H1 (cell line): ENCODE measurements at regions of chr15 and their contacts with region 1.

Region 1: GRCh38 chr15:71485099-71485693 is 325.2 kb upstream of the NR2E3 start:
- DNase-seq: no peak
- H3K4me3 ChIP-seq: no peak overlapping the region
- H3K27ac ChIP-seq: no peak overlapping the region
- H3K4me1 ChIP-seq: no peaks in the 10 kb centered on the region
- H3K27me3 ChIP-seq: no peaks in the 10 kb centered on the region
- CTCF ChIP-seq: peak; percentile 35 to 73 (median 66)
- EP300 ChIP-seq: no peak
- POLR2A ChIP-seq: no peak
- RAD21 ChIP-seq: peak in 1 of 2 experiments; percentile 40; a peak in 2 of 4 replicates

Region 2: GRCh38 chr15:71461748-71462147 is 23.4 kb before region 1 on chr15:
- CTCF ChIA-PET with region 1: interaction called, 16 read pairs
- POLR2A ChIA-PET with region 1: no interaction called
- DNase-seq: no peak
- H3K4me3 ChIP-seq: no peak overlapping the region
- H3K27ac ChIP-seq: no peak overlapping the region
- H3K4me1 ChIP-seq: peaks cover 2 to 5% (median 2%) of the 10 kb centered on the region in 4 experiments; a peak in 5 of 7 replicates
- H3K27me3 ChIP-seq: no peaks in the 10 kb centered on the region
- CTCF ChIP-seq: no peak
- EP300 ChIP-seq: no peak
- POLR2A ChIP-seq: no peak
- RAD21 ChIP-seq: no peak

Region 3: GRCh38 chr15:71469413-71469812 is 15.8 kb before region 1 on chr15:
- CTCF ChIA-PET with region 1: interaction called, 21 read pairs
- POLR2A ChIA-PET with region 1: no interaction called
- DNase-seq: no peak
- H3K4me3 ChIP-seq: no peak overlapping the region
- H3K27ac ChIP-seq: no peak overlapping the region
- H3K4me1 ChIP-seq: peaks cover 2 to 5% (median 2%) of the 10 kb centered on the region in 4 experiments; a peak in 5 of 7 replicates
- H3K27me3 ChIP-seq: no peaks in the 10 kb centered on the region
- CTCF ChIP-seq: peak in 1 of 3 experiments; percentile 10; a peak in 1 of 4 replicates
- EP300 ChIP-seq: no peak
- POLR2A ChIP-seq: no peak
- RAD21 ChIP-seq: peak in 1 of 2 experiments; percentile 20; a peak in 1 of 4 replicates

Region 4: DNA sequence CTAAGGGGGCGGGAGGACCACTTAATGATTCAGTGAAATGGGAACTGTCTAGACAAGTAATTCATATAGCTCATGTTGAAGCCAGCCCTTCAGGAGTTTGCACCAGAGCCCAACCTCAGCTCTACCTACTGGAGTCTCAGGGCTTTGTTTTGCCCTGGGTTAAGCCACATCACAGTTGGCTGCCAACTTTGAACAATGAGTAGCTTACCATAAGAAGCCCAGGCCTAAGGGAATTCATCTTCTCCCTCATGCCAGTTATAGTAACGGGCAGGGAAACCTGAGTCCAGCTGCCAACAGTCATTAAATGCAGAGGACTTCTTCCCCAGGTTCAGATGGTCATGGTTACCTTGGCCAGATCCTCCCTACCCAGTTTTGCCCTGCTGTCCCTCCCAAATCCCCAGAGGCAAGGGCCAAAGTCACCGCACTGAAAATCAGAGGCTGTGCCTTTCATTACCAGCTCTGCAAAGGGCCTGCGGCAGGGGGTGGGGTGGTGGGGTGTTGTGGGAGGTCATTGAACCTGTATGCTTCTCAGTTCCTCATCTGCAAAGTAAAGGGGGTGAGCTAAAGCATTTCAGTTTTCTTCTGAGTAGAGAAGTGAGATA is 23.0 kb after region 1 on chr15:
- CTCF ChIA-PET with region 1: interaction called, 36 read pairs
- POLR2A ChIA-PET with region 1: no interaction called
- DNase-seq: no peak
- H3K4me3 ChIP-seq: no peak overlapping the region
- H3K27ac ChIP-seq: no peak overlapping the region
- H3K4me1 ChIP-seq: peaks cover 0 to 9% (median 3%) of the 10 kb centered on the region in 4 experiments; a peak in 4 of 7 replicates
- H3K27me3 ChIP-seq: no peaks in the 10 kb centered on the region
- CTCF ChIP-seq: no peak
- EP300 ChIP-seq: no peak
- POLR2A ChIP-seq: no peak
- RAD21 ChIP-seq: no peak

Region 5: DNA sequence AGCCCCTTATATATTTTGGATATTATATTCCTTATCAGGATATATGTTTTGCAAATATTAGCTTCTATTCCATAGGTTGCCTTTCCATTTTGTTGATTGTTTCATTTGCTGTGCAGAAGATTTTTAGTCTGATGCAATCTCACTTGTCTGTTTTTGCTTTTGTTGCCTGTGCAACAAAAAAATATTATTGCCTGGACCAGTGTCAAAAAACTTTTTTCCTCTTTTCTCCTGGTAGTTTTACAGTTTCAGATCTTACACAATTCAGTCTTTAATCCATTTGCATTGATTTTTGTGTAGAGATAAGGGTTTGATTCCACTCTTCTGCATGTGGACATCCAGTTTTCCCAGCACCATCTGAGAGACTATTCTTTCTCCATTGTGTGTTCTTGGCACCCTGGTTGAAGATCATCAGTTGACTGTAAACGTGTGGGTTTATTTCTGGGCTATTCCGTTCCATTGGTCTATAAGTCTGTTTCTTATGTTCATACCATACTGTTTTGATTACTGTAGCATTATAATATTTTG is 96.3 kb after region 1 on chr15:
- CTCF ChIA-PET with region 1: no interaction called
- POLR2A ChIA-PET with region 1: no interaction called
- DNase-seq: no peak
- H3K4me3 ChIP-seq: no peak overlapping the region
- H3K27ac ChIP-seq: no peak overlapping the region
- H3K4me1 ChIP-seq: no peaks in the 10 kb centered on the region
- H3K27me3 ChIP-seq: no peaks in the 10 kb centered on the region
- CTCF ChIP-seq: no peak
- EP300 ChIP-seq: no peak
- POLR2A ChIP-seq: no peak
- RAD21 ChIP-seq: no peak